Heart right ventricle (tissue), 16 donors: ENCODE measurements at regions of chr15 and their contacts with region 1.

Region 1: GRCh38 chr15:33392453-33392852 is 81.7 kb downstream of the RYR3 start:
- DNase-seq: no peak
- ATAC-seq: no peak
- H3K4me3 ChIP-seq: no peak overlapping the region
- H3K27ac ChIP-seq: no peak overlapping the region
- H3K4me1 ChIP-seq: no peaks in the 10 kb centered on the region
- H3K27me3 ChIP-seq: peaks cover 0 to 4% (median 0%) of the 10 kb centered on the region in 7 donors
- CTCF ChIP-seq: no peak

Region 2: GRCh38 chr15:33453761-33454160 is 61.3 kb after region 1 on chr15:
- intact Hi-C with region 1: loop called in 1 of 10 experiments (anchors 10 kb)
- DNase-seq: no peak
- ATAC-seq: no peak
- H3K4me3 ChIP-seq: no peak overlapping the region
- H3K27ac ChIP-seq: no peak overlapping the region
- H3K4me1 ChIP-seq: no peaks in the 10 kb centered on the region
- H3K27me3 ChIP-seq: peaks cover 0 to 6% (median 0%) of the 10 kb centered on the region in 7 donors
- CTCF ChIP-seq: no peak

Region 3: GRCh38 chr15:33675246-33675645 is 282.8 kb after region 1 on chr15:
- intact Hi-C with region 1: no loop called
- DNase-seq: no peak
- ATAC-seq: no peak
- H3K4me3 ChIP-seq: no peak overlapping the region
- H3K27ac ChIP-seq: no peak overlapping the region
- H3K4me1 ChIP-seq: no peaks in the 10 kb centered on the region
- H3K27me3 ChIP-seq: peaks cover 0 to 46% (median 16%) of the 10 kb centered on the region in 7 donors
- CTCF ChIP-seq: peak in 5 of 9 donors; percentile 29 to 48 (median 34)